Activated CD4-positive, alpha-beta memory T cell treated with anti-CD3 and anti-CD28 coated beads, Interleukin-2, amount 10 ng/mL, durations not matched to agents 7 days and 5 days (primary cell): ENCODE measurements at regions of chr7 and their contacts with region 1.

Region 1: DNA sequence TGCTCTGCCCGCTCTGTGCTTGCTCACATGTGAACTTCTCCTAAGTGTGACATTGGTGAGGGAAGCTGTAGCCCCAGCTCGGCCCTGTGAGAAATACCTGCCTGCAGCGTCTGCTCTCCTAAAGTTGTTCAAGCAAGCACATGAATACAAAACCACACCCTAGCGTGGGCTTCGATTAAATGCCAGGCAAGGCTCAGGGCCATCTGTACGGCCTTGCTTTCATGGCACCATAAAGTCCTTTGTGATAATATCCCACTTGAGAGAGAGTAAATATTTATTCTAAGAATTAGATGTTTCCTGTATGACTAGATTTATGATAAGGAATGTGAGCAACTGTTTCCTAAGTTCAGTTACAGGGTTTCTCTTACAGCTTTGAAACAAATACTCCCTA is 262.8 kb upstream of the KLF14 start:
- DNase-seq: no peak
- H3K4me3 Mint-ChIP-seq: peak overlapping the region; percentile 51
- H3K27ac Mint-ChIP-seq: peak overlapping the region; percentile 85
- H3K4me1 Mint-ChIP-seq: peaks cover 78% of the 10 kb centered on the region
- H3K27me3 Mint-ChIP-seq: no peaks in the 10 kb centered on the region

Region 2: GRCh38 chr7:130951303-130951975 is 45.4 kb before region 1 on chr7:
- CTCF ChIA-PET with region 1: no interaction called
- POLR2A ChIA-PET with region 1: interaction called, 74 read pairs
- DNase-seq: no peak
- H3K4me3 Mint-ChIP-seq: no peak overlapping the region
- H3K27ac Mint-ChIP-seq: no peak overlapping the region
- H3K4me1 Mint-ChIP-seq: peaks cover 59% of the 10 kb centered on the region
- H3K27me3 Mint-ChIP-seq: no peaks in the 10 kb centered on the region

Region 3: GRCh38 chr7:130966246-130967009 is 30.4 kb before region 1 on chr7:
- CTCF ChIA-PET with region 1: interaction called, 3 read pairs
- POLR2A ChIA-PET with region 1: interaction called, 74 read pairs
- DNase-seq: no peak
- H3K4me3 Mint-ChIP-seq: no peak overlapping the region
- H3K27ac Mint-ChIP-seq: peak overlapping the region; percentile 49
- H3K4me1 Mint-ChIP-seq: peaks cover 73% of the 10 kb centered on the region
- H3K27me3 Mint-ChIP-seq: no peaks in the 10 kb centered on the region

Region 4: GRCh38 chr7:131225619-131226513 is 229.0 kb after region 1 on chr7:
- CTCF ChIA-PET with region 1: no interaction called
- POLR2A ChIA-PET with region 1: no interaction called
- DNase-seq: no peak
- H3K4me3 Mint-ChIP-seq: no peak overlapping the region
- H3K27ac Mint-ChIP-seq: peak overlapping the region; percentile 23
- H3K4me1 Mint-ChIP-seq: peaks cover 25% of the 10 kb centered on the region
- H3K27me3 Mint-ChIP-seq: no peaks in the 10 kb centered on the region